Transverse colon (tissue), 4 donors: ENCODE measurements at regions of chr5 and their contacts with region 1.

Region 1: GRCh38 chr5:140174465-140175366 is at the start of gene CYSTM1:
- DNase-seq: peak; percentile 99
- H3K4me3 ChIP-seq: peak within 1 kb of the TSS; percentile 76 to 98 (median 90)
- H3K27ac ChIP-seq: peak within 1 kb of the TSS; percentile 97 to 100 (median 100)
- H3K4me1 ChIP-seq: peaks cover 9 to 40% (median 28%) of the 10 kb centered on the region in 4 donors
- H3K27me3 ChIP-seq: no peaks in the 10 kb centered on the region
- CTCF ChIP-seq: no peak
- EP300 ChIP-seq: peak; percentile 84
- POLR2A ChIP-seq: peak; percentile 96
- total RNA-seq, gene CYSTM1: 32.8 to 264 (median 107) TPM

Region 2: DNA sequence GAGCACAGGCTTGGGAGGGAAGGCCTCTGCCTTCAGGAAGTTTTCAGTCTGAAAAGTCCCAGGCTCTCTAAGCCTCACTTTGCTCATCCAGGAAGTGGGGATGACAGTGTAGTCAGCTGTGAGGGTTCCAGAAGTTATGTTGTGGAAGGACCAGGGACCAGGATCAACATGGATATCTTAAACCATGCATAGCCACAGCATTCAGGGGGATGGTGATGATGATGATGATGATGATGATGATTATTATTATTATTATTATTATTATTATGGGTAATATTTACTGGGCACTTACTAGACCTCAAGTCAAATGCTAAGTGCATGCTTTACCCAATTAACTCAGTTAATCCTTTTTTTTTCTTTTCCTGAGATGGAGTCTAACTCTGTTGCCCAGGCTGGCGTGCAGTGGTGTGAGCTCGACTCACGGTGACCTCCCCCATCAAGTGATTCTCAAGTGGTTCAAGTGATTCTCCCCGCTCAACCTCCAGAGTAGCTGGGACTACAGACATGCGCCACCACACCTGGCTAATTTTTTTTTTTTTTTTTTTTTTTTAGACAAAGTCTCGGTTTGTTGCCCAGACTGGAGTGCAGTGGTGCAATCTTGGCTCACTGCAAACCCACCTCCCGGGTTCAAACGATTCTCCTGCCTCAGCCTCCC is 457.6 kb before region 1 on chr5:
- in situ Hi-C with region 1: no loop called
- intact Hi-C with region 1: no loop called
- DNase-seq: no peak
- H3K4me3 ChIP-seq: no peak overlapping the region
- H3K27ac ChIP-seq: no peak overlapping the region
- H3K4me1 ChIP-seq: peaks cover 0 to under 1% (median 0%) of the 10 kb centered on the region in 4 donors
- H3K27me3 ChIP-seq: peaks cover 5% of the 10 kb centered on the region
- CTCF ChIP-seq: no peak
- EP300 ChIP-seq: no peak
- POLR2A ChIP-seq: no peak

Region 3: DNA sequence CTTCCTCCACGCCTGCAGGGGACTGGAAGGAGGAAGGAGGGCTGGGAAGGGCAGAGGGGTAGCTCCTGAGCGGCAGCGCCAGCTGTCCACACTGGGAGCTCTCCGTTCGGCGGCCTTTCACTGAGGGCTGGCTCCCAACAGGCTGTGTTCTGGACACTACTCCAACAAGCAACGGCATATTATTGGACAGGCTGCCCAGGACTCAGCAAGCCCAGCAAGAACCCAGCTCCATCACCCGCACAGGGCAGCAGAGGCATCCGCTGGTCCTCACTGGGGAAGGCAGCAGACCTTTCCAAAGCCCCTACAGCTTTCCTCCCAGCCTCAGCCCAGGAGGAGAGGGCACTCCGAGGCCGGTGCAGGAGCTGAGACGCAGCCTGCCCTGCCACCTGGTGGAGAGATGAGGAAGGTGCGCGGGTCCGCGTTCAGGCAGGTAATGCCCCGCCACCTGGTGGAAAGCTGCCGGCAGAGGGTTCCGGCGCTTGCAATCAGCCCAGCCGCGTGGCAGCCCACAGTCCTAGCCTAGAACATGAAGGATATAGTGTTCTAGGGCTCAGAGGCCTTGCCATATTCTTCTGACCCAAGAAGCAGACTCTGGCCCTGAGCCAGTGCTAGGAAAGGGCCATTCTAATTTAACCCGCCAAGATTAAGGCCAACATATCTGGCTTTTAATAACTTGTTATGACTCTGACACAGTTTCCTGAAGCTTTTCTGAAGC is 206.0 kb before region 1 on chr5:
- in situ Hi-C with region 1: no loop called
- intact Hi-C with region 1: no loop called
- DNase-seq: peak; percentile 90
- H3K4me3 ChIP-seq: no peak overlapping the region
- H3K27ac ChIP-seq: no peak overlapping the region
- H3K4me1 ChIP-seq: peaks cover 0 to 7% (median 1%) of the 10 kb centered on the region in 4 donors
- H3K27me3 ChIP-seq: no peaks in the 10 kb centered on the region
- CTCF ChIP-seq: peak; percentile 98 to 99 (median 99)
- EP300 ChIP-seq: no peak
- POLR2A ChIP-seq: no peak

Region 4: DNA sequence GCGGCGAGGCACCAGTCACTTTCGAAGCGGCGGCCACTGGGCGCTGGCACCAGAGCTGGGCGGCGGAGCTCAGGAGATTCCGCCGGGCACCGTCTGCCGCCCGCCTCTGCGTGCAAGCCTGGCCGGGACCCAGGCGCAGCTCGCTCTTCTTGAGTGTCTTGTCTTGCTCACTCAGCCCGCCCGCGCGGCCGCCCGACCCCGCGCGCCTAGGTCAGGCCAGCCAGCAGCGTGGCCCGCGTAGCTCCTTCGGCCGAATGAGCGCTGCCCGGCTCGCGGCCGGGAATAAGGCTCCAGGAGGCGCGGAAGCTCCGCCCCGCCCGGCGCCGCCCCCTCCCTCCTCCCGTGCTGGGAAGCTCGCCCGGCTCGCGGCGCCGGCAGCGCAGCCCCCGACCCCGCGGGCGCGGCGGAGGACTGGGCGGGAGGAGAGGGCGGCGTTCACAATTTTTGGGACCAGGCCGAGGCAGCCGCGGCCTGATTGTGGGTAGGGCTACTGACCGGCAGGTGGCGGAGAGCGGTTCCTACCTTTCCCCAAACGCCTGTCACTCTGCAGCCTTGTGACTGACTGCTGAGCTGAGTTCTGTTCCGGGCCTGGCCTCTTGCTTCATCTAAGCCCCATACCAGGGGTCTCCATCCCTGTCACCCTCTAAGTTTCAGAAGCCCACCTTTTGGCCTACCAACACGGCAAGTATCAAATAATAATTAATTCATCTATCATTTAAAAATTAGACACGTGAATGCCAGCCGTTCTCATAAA is 171.8 kb after region 1 on chr5 and contains the start of gene HBEGF:
- in situ Hi-C with region 1: no loop called
- intact Hi-C with region 1: loop called (anchors 10 kb)
- DNase-seq: peak; percentile 90
- H3K4me3 ChIP-seq: peak within 1 kb of the TSS; percentile 54 to 78 (median 72)
- H3K27ac ChIP-seq: peak within 1 kb of the TSS; percentile 86 to 95 (median 90)
- H3K4me1 ChIP-seq: peaks cover 19 to 64% (median 42%) of the 10 kb centered on the region in 4 donors
- H3K27me3 ChIP-seq: no peaks in the 10 kb centered on the region
- CTCF ChIP-seq: peak in 4 of 5 experiments; percentile 38 to 49 (median 41)
- EP300 ChIP-seq: no peak
- POLR2A ChIP-seq: peak; percentile 89
- total RNA-seq, gene HBEGF: 10.5 to 40.0 (median 35.6) TPM

Region 5: GRCh38 chr5:141084487-141084990 is 909.8 kb after region 1 on chr5:
- in situ Hi-C with region 1: no loop called
- intact Hi-C with region 1: no loop called
- DNase-seq: peak; percentile 18
- H3K4me3 ChIP-seq: peak overlapping the region in 3 of 4 donors; percentile 21 to 36 (median 29)
- H3K27ac ChIP-seq: peak overlapping the region in 3 of 4 donors; percentile 44 to 67 (median 57)
- H3K4me1 ChIP-seq: no peaks in the 10 kb centered on the region
- H3K27me3 ChIP-seq: peaks cover 4% of the 10 kb centered on the region
- CTCF ChIP-seq: peak in 4 of 5 experiments; percentile 21 to 35 (median 27)
- EP300 ChIP-seq: no peak
- POLR2A ChIP-seq: no peak